Right ventricle myocardium inferior (tissue), 1 donor: ENCODE measurements at regions of chrX and their contacts with region 1.

Region 1: DNA sequence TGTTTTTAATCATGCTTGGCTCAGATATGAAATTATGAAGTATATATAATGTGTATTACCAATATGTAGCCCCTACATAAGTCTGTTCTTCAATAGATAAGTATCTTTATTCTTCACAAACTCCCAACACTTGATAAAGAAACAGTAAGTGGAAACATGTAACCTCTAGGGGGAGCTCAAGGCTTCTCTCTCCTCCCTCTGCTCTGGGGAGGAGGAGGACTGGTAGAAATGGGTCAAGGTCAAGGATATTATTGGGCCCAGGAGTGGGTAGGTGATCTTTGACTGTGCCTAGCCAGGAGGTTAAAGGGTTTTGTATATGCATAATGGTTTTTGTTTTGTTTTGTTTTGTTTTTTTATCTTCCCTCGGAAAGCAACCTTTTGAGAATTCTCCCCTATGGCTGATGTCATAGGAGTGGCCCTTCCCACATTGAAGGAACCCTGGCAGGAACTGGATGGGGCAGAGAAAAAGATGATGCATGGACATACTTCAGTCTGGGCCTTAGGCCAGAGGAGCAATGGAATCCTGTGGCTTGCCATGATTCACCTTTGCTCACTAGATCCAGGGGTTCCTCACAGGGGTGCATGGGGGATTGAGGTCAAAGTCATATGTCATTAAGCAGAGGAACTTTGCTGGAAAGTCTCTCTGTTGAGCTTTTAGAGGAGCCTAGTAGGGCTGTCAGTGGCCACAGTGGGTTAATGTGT is 460.3 kb downstream of the MID1IP1 start:
- DNase-seq: no peak
- ATAC-seq: no peak

Region 2: DNA sequence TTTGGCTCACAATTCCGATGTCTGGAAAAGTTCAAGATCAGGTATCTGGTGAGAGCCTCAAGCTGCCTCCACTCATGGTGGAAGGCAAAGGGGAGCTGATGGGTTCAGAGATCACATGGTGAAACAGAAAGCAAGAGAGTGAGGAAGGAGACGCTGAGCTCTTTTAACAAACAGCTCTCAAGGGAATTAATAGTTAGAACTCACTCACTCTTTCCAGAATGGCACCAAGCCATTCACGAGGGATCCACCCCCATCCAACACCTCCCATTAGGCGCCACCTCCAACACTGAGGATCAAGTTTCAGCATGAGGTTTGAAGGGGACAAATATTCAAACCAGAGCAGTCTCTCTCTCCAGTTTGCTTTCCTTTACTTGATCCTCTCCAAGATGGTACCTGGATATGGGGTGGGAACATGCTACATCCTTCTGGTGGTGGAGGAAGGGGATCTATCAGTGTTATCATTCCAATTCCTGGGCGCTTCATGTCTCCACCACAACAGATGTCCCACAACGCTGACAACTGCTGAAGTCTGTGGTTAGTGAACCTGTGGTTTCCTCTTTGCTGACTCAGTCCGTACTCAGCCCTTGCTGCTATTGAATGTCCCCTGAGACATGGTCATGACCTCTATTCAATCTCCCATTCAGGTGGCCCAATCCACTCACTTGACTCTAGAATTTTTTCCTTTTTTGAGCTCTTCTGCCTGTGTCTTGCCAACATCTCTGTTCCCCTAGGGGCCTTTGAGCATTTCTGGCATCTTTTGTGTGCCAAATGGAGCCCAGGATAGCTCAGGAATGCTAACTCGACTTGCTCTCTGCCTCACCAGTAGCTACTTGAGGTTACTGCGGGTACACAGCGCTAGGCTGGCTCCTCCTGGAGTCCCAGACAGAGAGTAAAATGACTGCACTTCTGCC is 65.2 kb before region 1 on chrX:
- intact Hi-C with region 1: no loop called
- DNase-seq: no peak
- ATAC-seq: no peak

Region 3: GRCh38 chrX:39808471-39808917 is 546.9 kb after region 1 on chrX:
- intact Hi-C with region 1: loop called (anchors 10 kb)
- DNase-seq: no peak
- ATAC-seq: peak; percentile 49